Psoas muscle (tissue), 8 donors: ENCODE measurements at regions of chr1 and their contacts with region 1.

Region 1: DNA sequence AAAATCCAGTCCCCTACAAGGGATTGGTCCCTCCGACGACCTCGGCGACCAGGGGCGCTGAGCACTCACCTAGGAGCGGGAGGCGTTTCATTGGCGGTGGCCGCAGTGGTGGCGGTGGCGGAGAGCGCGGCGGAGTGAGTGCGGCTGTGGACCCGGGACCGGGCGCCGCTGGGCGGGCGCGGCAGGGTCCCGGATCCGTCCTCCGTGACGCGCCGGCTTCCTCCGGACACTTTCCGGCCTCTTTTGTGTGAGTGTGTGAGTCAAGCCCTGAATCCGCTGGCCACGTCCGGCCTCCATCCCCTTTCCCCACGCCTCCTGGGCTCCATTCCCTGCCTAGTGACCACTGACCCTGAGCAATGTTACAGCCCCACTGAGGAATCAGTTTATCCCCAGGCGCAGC is at the start of gene ADGRL4:
- DNase-seq: peak; percentile 36 to 57
- ATAC-seq: peak; percentile 39 to 64 (median 60)
- H3K4me3 ChIP-seq: peak within 1 kb of the TSS; percentile 58
- H3K27ac ChIP-seq: peak within 1 kb of the TSS; percentile 68
- H3K4me1 ChIP-seq: no peaks in the 10 kb centered on the region
- H3K27me3 ChIP-seq: peaks cover 0 to 9% (median 0%) of the 10 kb centered on the region in 3 donors
- CTCF ChIP-seq: no peak
- total RNA-seq, gene ADGRL4: 8.9 to 19.1 (median 16.9) TPM

Region 2: GRCh38 chr1:79128722-79129121 is 122.2 kb after region 1 on chr1:
- intact Hi-C with region 1: no loop called
- DNase-seq: no peak
- ATAC-seq: no peak
- H3K4me3 ChIP-seq: no peak overlapping the region
- H3K27ac ChIP-seq: no peak overlapping the region
- H3K4me1 ChIP-seq: no peaks in the 10 kb centered on the region
- H3K27me3 ChIP-seq: no peaks in the 10 kb centered on the region
- CTCF ChIP-seq: no peak

Region 3: DNA sequence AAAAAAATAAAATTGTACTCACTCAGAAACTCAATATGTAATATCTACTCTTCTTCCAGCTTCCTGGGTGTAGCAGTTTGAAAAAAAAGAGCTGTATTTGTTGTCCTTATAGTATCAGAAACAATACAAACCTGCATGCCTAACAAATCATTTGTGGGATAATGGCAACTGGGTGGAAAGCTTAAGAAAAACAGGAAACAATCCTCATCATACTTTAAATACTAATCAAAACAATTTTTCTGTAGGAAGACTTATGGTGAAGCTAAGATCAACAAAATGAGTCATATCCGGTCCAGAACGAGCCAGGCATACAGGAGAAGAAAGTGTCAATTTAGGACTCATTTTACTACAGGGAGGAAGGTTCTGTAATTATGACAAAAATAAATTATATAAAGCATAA is 181.8 kb after region 1 on chr1:
- intact Hi-C with region 1: loop called in 1 of 2 experiments (anchors 10 kb)
- DNase-seq: no peak
- ATAC-seq: no peak
- H3K4me3 ChIP-seq: no peak overlapping the region
- H3K27ac ChIP-seq: no peak overlapping the region
- H3K4me1 ChIP-seq: no peaks in the 10 kb centered on the region
- H3K27me3 ChIP-seq: no peaks in the 10 kb centered on the region
- CTCF ChIP-seq: no peak